Heart left ventricle (tissue), 16 donors: ENCODE measurements at regions of chr16 and their contacts with region 1.

Region 1: DNA sequence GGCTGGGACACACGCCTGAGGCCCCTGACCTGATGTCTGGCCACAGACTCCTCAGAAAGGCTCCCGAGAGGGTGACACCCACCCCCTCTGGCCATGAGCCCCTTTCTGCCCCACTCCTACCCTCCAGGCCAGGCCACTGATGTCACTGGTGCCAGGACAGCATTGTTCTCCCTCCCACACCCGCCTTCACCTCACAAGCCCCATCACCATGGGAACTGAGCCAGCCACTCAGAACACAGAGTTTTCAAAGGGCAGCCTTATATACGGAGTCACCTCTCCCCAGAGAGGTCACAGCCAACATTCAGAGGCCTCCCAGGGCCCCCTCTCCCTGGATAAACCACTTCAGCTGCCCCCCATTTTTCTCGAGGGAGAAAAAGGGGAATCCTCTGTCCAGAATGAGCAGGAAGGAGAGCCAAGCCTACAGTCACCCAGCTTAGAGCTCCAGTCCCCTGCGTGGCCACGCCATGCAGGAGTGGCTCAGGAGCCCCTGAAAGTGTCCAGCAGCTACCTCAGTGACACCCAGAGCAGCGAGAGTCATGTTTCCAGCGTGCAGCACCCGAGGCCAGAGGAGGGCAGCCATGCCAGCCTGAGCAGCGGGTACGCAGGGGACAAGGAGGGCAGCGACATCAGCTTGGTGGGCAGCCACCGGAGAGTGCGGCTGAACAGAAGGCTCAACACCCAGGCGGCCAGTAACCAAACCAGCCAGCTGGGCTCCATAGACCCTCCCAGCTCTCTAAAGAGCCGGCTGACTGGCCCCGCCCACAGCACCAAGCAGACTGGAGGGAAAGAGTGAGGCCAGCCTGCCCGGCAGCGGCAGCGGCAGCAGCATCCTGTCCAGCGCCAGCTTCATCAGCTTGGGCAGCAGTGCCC is at the start of gene C16orf82:
- DNase-seq: peak in 2 of 5 donors; percentile 41 to 66
- ATAC-seq: peak in 2 of 4 donors; percentile 26 to 39
- H3K4me3 ChIP-seq: no peak within 1 kb of the TSS
- H3K27ac ChIP-seq: no peak within 1 kb of the TSS
- H3K4me1 ChIP-seq: no peaks in the 10 kb centered on the region
- H3K27me3 ChIP-seq: peaks cover 0 to 29% (median 0%) of the 10 kb centered on the region in 9 donors
- CTCF ChIP-seq: no peak
- POLR2A ChIP-seq: no peak
- total RNA-seq, gene C16orf82: not detected

Region 2: GRCh38 chr16:26987597-26988010 is 79.3 kb before region 1 on chr16:
- intact Hi-C with region 1: no loop called
- DNase-seq: no peak
- ATAC-seq: no peak
- H3K4me3 ChIP-seq: no peak overlapping the region
- H3K27ac ChIP-seq: no peak overlapping the region
- H3K4me1 ChIP-seq: no peaks in the 10 kb centered on the region
- H3K27me3 ChIP-seq: peaks cover 0 to 17% (median 0%) of the 10 kb centered on the region in 9 donors
- CTCF ChIP-seq: no peak
- POLR2A ChIP-seq: no peak

Region 3: DNA sequence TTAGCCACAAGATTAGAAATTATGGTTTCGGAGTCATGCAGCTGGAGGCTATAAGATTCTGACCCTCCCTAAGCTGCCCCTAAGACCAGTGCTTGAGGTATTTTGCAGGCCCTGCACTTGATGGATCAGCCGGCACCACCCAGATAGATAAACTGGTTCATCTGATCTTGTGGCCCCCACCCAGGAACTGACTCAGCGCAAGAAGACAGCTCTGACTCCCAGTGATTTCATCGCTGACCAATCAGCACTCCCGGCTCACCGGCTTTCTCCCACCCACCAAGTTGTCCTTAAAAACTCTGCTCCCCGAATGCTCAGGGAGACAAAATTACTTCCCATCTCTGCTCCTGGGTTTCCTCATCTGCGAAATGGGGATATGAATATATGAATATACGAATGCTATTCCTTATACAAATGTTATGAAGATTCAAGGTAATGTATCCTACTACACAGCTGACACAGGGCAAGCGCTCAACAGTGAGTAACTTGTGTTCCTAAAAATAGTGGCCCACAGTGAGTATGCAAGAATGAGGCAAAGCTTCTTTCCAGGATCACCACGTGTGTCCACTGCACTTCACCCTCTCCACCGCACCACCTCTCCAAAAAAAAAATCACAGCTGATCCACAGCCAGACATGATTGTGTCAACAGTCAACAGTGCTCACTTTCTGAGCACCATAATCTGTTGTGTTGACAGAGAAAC is 33.5 kb before region 1 on chr16:
- intact Hi-C with region 1: loop called in 1 of 10 experiments (anchors 5 kb)
- DNase-seq: no peak
- ATAC-seq: no peak
- H3K4me3 ChIP-seq: no peak overlapping the region
- H3K27ac ChIP-seq: no peak overlapping the region
- H3K4me1 ChIP-seq: no peaks in the 10 kb centered on the region
- H3K27me3 ChIP-seq: peaks cover 0 to 3% (median 0%) of the 10 kb centered on the region in 9 donors
- CTCF ChIP-seq: no peak
- POLR2A ChIP-seq: no peak

Region 4: GRCh38 chr16:27374804-27375425 is 308.0 kb after region 1 on chr16:
- intact Hi-C with region 1: no loop called
- DNase-seq: peak in 4 of 5 donors; percentile 54 to 77 (median 56)
- ATAC-seq: peak in 3 of 4 donors; percentile 83 to 91 (median 87)
- H3K4me3 ChIP-seq: peak overlapping the region in 5 of 12 donors; percentile 6 to 42 (median 22)
- H3K27ac ChIP-seq: peak overlapping the region in 5 of 12 donors; percentile 7 to 85 (median 27)
- H3K4me1 ChIP-seq: peaks cover 0 to 62% (median 0%) of the 10 kb centered on the region in 12 donors
- H3K27me3 ChIP-seq: no peaks in the 10 kb centered on the region
- CTCF ChIP-seq: peak in 8 of 12 donors; percentile 22 to 59 (median 45)
- POLR2A ChIP-seq: no peak